ENCODE measurements at regions of chr4 and their contacts with region 1.

Region 1: DNA sequence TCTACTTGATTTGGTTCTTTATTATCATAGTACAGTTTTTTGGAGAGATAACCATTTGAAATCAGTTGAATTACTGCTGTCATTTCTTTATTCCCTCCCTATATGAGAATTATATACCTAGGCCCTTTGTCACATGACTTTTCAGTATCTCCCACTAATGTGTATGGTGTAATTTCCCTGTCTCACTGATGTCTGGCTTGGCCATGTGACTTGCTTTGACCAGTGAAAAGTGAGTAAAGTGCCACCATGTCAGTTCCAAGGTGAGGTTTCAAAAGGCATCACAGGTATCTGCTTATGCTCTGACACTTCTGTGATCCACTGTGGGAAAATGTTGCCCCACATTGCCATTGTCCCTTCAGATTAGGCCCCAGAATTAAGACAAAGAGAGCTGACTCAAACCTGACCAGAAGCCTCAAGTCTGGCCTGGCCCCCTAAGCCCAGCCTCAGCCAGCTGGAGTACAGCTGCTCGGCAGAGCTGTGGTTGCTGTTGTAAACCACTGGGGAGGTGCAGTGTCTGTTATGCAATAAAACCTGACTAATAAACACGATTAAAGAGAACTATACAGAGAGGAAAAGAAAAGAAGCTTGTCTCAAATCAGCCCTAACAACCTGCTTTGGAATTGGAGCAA is 27.5 kb downstream of the SETD7 start:
- DNase-seq: peak; percentile 96
- ATAC-seq: peak; percentile 92
- H3K4me3 ChIP-seq: no peak overlapping the region
- H3K27ac ChIP-seq: peak overlapping the region; percentile 81; the same call in 1 of the 2 replicates
- H3K4me1 ChIP-seq: peaks cover 6% of the 10 kb centered on the region
- H3K27me3 ChIP-seq: no peaks in the 10 kb centered on the region
- CTCF ChIP-seq: no peak
- POLR2A ChIP-seq: no peak
- RAD21 ChIP-seq: no peak

Region 2: DNA sequence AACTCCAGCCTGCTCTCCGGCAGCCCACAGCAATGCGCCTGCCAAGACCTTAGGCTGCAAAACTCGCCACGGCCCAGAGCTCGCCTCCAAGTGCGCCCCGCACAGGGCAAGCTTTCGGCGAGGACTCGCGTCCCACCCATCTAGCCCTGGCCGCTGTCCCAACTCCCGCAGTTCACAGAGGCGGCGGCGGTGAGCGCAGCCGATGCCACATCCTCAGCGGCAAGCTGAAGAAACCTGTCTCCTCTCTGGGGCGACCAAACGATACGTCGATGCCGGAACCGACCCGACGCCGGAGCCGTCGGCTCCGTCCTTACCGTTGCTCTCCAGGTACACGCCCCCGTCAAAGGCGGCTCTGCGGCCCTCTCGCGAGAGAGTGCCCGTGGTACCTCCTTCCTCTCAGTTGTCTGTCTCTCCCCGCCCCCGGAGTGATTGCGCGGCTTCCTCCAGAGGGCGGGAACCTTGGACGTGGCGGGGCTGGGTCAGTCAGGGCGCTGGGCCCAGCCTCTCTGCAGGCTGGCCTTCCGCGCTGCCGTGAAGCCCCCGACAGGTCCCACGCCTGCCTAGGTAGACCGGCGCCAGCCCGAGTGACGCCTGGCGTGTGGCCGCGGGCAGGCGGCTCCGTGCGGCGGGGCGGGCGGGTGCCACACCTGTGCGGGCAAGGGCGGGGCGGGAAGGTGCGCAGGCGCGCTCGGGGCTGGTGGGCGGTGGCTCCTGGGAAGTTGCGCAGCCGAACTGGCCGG is 75.0 kb before region 1 on chr4:
- CTCF ChIA-PET with region 1: no interaction called
- POLR2A ChIA-PET with region 1: interaction called, 3 read pairs
- dilution Hi-C with region 1: no loop called
- in situ Hi-C with region 1: no loop called
- intact Hi-C with region 1: loop called (anchors 2 kb)
- DNase-seq: peak; percentile 97
- ATAC-seq: peak; percentile 94
- H3K4me3 ChIP-seq: peak overlapping the region; percentile 86
- H3K27ac ChIP-seq: peak overlapping the region; percentile 94
- H3K4me1 ChIP-seq: peaks cover 3% of the 10 kb centered on the region
- H3K27me3 ChIP-seq: no peaks in the 10 kb centered on the region
- CTCF ChIP-seq: no peak
- POLR2A ChIP-seq: peak; percentile 94
- RAD21 ChIP-seq: no peak

Region 3: GRCh38 chr4:139554893-139555704 is 26.6 kb after region 1 on chr4:
- CTCF ChIA-PET with region 1: interaction called, 6 read pairs
- POLR2A ChIA-PET with region 1: interaction called, 3 read pairs
- dilution Hi-C with region 1: no loop called
- in situ Hi-C with region 1: no loop called
- intact Hi-C with region 1: loop called (anchors 2 kb)
- DNase-seq: peak; percentile 87
- ATAC-seq: peak; percentile 63
- H3K4me3 ChIP-seq: peak overlapping the region; percentile 64
- H3K27ac ChIP-seq: peak overlapping the region; percentile 90
- H3K4me1 ChIP-seq: peaks cover 9% of the 10 kb centered on the region
- H3K27me3 ChIP-seq: peaks cover 18% of the 10 kb centered on the region
- CTCF ChIP-seq: no peak
- POLR2A ChIP-seq: peak; percentile 76
- RAD21 ChIP-seq: no peak

Region 4: GRCh38 chr4:139872274-139872673 is 343.8 kb after region 1 on chr4:
- CTCF ChIA-PET with region 1: no interaction called
- POLR2A ChIA-PET with region 1: no interaction called
- dilution Hi-C with region 1: no loop called
- in situ Hi-C with region 1: no loop called
- intact Hi-C with region 1: no loop called
- DNase-seq: peak; percentile 97
- ATAC-seq: peak; percentile 93
- H3K4me3 ChIP-seq: no peak overlapping the region
- H3K27ac ChIP-seq: no peak overlapping the region
- H3K4me1 ChIP-seq: peaks cover 7% of the 10 kb centered on the region
- H3K27me3 ChIP-seq: no peaks in the 10 kb centered on the region
- CTCF ChIP-seq: no peak
- POLR2A ChIP-seq: no peak
- RAD21 ChIP-seq: peak; percentile 10; the same call in 1 of the 2 replicates

Measured in IMR-90 (cell line).